ENCODE measurements at regions of chr6 and their contacts with region 1.

Region 1: DNA sequence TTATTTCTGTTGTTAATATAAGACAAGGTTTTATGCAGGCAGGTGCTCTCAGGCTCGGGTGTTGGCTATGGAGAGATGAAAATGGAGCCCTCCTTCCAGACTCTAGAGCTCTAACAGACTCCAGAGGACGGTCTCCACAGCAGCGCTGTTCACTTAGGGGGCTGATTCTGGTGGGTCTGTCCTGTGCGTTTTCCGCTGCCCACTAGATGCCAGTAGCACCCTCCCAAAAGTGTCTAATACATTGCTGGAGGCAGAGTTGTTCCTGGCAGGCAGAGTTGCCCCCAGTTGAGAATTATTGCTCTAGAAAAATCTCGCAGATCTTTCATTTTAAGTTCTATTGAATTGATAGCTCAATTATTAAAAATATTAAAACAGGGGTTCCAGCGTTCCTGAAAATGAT is 109.9 kb downstream of the MAP3K4 start:
- DNase-seq: no peak
- H3K4me3 ChIP-seq: no peak overlapping the region
- H3K27ac ChIP-seq: no peak overlapping the region
- H3K4me1 ChIP-seq: no peaks in the 10 kb centered on the region
- H3K27me3 ChIP-seq: no peaks in the 10 kb centered on the region
- CTCF ChIP-seq: peak; percentile 44 to 54 (median 47)
- EP300 ChIP-seq: no peak
- POLR2A ChIP-seq: no peak
- RAD21 ChIP-seq: peak; percentile 60 to 73

Region 2: GRCh38 chr6:161292145-161292544 is 190.6 kb after region 1 on chr6:
- CTCF ChIA-PET with region 1: no interaction called
- POLR2A ChIA-PET with region 1: no interaction called
- DNase-seq: peak in 1 of 2 experiments; percentile 44
- H3K4me3 ChIP-seq: peak overlapping the region in 1 of 4 experiments; percentile 29; a peak in 1 of 8 replicates
- H3K27ac ChIP-seq: no peak overlapping the region
- H3K4me1 ChIP-seq: peaks cover 5 to 14% (median 11%) of the 10 kb centered on the region in 4 experiments
- H3K27me3 ChIP-seq: no peaks in the 10 kb centered on the region
- CTCF ChIP-seq: no peak
- EP300 ChIP-seq: no peak
- POLR2A ChIP-seq: no peak
- RAD21 ChIP-seq: no peak

Region 3: GRCh38 chr6:161353208-161353613 is 251.7 kb after region 1 on chr6:
- CTCF ChIA-PET with region 1: interaction called, 15 read pairs
- POLR2A ChIA-PET with region 1: no interaction called
- DNase-seq: peak; percentile 66 to 78
- H3K4me3 ChIP-seq: no peak overlapping the region
- H3K27ac ChIP-seq: no peak overlapping the region
- H3K4me1 ChIP-seq: no peaks in the 10 kb centered on the region; a peak in 1 of 7 replicates
- H3K27me3 ChIP-seq: no peaks in the 10 kb centered on the region
- CTCF ChIP-seq: peak; percentile 55 to 78 (median 77)
- EP300 ChIP-seq: 0 out of 3 replicates have a peak, but pooled peaks of 1 of the 2 experiments have one; percentile 38
- POLR2A ChIP-seq: no peak
- RAD21 ChIP-seq: peak; percentile 81 to 91

Measured in H1 (cell line).